B cell (primary cell): ENCODE measurements at regions of chr1 and their contacts with region 1.

Region 1: DNA sequence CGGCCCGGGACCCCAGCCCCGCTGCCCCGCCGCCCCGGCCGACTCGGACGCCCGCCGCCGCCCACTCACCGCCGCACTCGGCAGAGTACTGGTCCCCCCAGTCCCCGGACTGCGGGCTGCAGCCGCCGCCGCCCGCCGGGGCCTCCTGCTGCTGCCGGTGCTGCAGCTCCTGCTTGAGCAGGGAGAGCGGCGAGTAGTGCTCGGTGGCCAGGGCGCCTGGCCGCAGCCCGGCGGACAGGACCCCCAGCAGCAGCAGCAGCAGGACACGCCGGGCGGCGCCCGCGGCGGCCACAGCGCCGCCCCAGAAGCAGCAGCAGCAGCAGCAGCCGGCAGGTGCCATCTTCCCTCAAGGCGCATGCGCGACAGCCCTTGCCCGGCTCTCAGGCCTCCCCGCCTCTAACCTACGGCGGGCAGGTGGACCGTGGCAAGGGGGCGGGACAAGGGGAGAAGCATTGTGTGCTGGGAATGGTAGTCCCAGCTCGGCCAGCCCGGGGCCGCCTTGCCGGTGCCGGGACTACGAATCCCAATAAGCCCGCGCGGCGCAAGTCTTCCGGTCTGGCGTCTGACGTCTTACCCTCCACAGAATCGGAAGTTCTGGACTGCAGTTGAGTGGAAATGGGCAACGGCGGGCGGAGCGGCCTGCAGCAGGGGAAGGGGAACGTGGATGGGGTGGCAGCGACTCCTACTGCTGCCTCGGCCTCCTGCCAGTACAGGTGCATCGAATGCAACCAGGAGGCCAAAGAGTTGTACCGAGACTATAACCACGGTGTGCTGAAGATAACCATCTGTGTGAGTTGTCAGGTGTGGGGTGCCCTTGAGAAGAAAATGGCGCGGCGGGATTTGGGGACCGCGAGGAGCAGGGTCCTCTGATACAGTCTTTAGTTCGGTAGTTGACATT is at the starts of genes ARV1 and TTC13:
- DNase-seq: peak; percentile 99
- ATAC-seq: peak; percentile 95
- H3K4me3 ChIP-seq: peak within 1 kb of the TSS; percentile 67 to 91 (median 74)
- H3K4me3 Mint-ChIP-seq: peak within 1 kb of the TSS; percentile 99
- H3K27ac ChIP-seq: peak within 1 kb of the TSS; percentile 66 to 78
- H3K27ac Mint-ChIP-seq: peak within 1 kb of the TSS; percentile 99
- H3K4me1 ChIP-seq: peaks cover 29 to 40% of the 10 kb centered on the region in 2 donors
- H3K4me1 Mint-ChIP-seq: peaks cover 46% of the 10 kb centered on the region
- H3K27me3 ChIP-seq: no peaks in the 10 kb centered on the region
- H3K27me3 Mint-ChIP-seq: no peaks in the 10 kb centered on the region
- CTCF ChIP-seq: peak; percentile 76
- total RNA-seq, gene ARV1: 10.7 and 12.0 TPM in 2 replicates
- total RNA-seq, gene TTC13: 55.0 TPM in 2 replicates

Region 2: GRCh38 chr1:229341774-229342655 is 1636.7 kb before region 1 on chr1:
- CTCF ChIA-PET with region 1: no interaction called
- POLR2A ChIA-PET with region 1: no interaction called
- intact Hi-C with region 1: loop called (anchors 5 kb)
- DNase-seq: peak; percentile 91
- ATAC-seq: peak; percentile 82
- H3K4me3 ChIP-seq: peak overlapping the region; percentile 66 to 86 (median 80)
- H3K4me3 Mint-ChIP-seq: peak overlapping the region; percentile 88
- H3K27ac ChIP-seq: peak overlapping the region; percentile 24 to 79
- H3K27ac Mint-ChIP-seq: peak overlapping the region; percentile 90
- H3K4me1 ChIP-seq: peaks cover 21 to 23% of the 10 kb centered on the region in 2 donors
- H3K4me1 Mint-ChIP-seq: peaks cover 42% of the 10 kb centered on the region
- H3K27me3 ChIP-seq: peaks cover 0 to 12% (median 3%) of the 10 kb centered on the region in 4 experiments
- H3K27me3 Mint-ChIP-seq: peaks cover 20% of the 10 kb centered on the region
- CTCF ChIP-seq: no peak

Region 3: DNA sequence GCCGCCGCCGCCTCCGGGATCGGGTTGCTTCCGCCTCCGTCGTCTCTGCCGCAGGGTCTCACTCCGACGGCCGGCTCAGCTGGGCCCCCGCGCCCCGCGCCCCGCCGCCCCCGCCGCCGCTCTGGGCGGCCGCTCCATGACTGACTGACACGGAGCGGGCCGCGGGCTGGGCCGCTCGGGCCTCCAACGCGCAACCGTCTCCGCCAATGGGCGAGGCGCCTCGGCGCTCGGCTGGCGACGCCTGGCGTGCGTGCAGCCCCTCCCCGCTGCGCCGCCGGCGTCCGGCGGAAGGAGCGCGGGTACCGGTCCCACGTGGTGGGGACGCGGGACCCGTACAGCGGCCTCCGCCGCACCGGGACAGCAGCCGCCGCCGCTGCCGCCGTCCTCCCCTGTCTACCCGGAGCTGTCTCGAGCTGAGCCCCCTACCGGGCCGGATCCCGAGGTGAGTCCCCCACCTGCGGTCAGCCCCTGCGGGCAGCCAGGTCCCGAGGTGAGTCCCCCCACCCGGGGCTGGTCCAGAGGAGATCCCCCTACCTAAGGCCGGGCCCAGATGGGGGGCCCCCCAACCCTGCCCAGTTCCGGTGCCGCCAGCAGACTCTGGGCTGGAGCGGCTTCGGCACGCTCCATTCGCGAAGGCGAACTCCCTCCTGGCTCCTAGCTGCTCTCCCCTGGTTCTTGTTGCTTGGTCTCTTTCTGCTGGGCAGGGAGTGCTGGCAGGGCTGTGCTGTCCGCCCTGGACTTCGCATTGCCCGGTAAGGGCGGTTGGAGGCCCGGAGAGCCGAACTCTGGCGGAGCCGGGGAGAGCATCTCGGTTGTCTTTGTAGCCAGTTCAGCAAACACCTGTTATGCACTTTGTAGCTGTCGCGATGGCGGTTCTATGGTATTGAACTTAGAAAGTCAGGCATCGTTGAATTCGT is 1352.6 kb before region 1 on chr1 and contains the starts of genes TAF5L and URB2:
- CTCF ChIA-PET with region 1: no interaction called
- POLR2A ChIA-PET with region 1: no interaction called
- intact Hi-C with region 1: loop called (anchors 5 kb)
- DNase-seq: peak; percentile 90
- ATAC-seq: peak; percentile 92
- H3K4me3 ChIP-seq: peak within 1 kb of the TSS; percentile 74 to 91 (median 86)
- H3K4me3 Mint-ChIP-seq: peak within 1 kb of the TSS; percentile 98
- H3K27ac ChIP-seq: peak within 1 kb of the TSS; percentile 58 to 82
- H3K27ac Mint-ChIP-seq: peak within 1 kb of the TSS; percentile 93
- H3K4me1 ChIP-seq: peaks cover 25 to 28% of the 10 kb centered on the region in 2 donors
- H3K4me1 Mint-ChIP-seq: peaks cover 48% of the 10 kb centered on the region
- H3K27me3 ChIP-seq: no peaks in the 10 kb centered on the region
- H3K27me3 Mint-ChIP-seq: no peaks in the 10 kb centered on the region
- CTCF ChIP-seq: no peak
- total RNA-seq, gene TAF5L: 21.2 and 24.0 TPM in 2 replicates
- total RNA-seq, gene URB2: 9.6 and 11.2 TPM in 2 replicates

Region 4: GRCh38 chr1:230917284-230918135 is 61.2 kb before region 1 on chr1:
- CTCF ChIA-PET with region 1: interaction called, 14 read pairs
- POLR2A ChIA-PET with region 1: no interaction called
- intact Hi-C with region 1: loop called (anchors 1 kb)
- DNase-seq: peak; percentile 85
- ATAC-seq: peak; percentile 64
- H3K4me3 ChIP-seq: no peak overlapping the region
- H3K4me3 Mint-ChIP-seq: no peak overlapping the region
- H3K27ac ChIP-seq: peak overlapping the region in 1 of 2 donors; percentile 53
- H3K27ac Mint-ChIP-seq: no peak overlapping the region
- H3K4me1 ChIP-seq: no peaks in the 10 kb centered on the region
- H3K4me1 Mint-ChIP-seq: no peaks in the 10 kb centered on the region
- H3K27me3 ChIP-seq: no peaks in the 10 kb centered on the region
- H3K27me3 Mint-ChIP-seq: no peaks in the 10 kb centered on the region
- CTCF ChIP-seq: peak; percentile 91

Region 5: GRCh38 chr1:230940848-230941247 is 37.9 kb before region 1 on chr1:
- CTCF ChIA-PET with region 1: no interaction called
- POLR2A ChIA-PET with region 1: no interaction called
- intact Hi-C with region 1: loop called (anchors 5 kb)
- DNase-seq: no peak
- ATAC-seq: no peak
- H3K4me3 ChIP-seq: no peak overlapping the region
- H3K4me3 Mint-ChIP-seq: no peak overlapping the region
- H3K27ac ChIP-seq: no peak overlapping the region
- H3K27ac Mint-ChIP-seq: no peak overlapping the region
- H3K4me1 ChIP-seq: no peaks in the 10 kb centered on the region
- H3K4me1 Mint-ChIP-seq: no peaks in the 10 kb centered on the region
- H3K27me3 ChIP-seq: no peaks in the 10 kb centered on the region
- H3K27me3 Mint-ChIP-seq: no peaks in the 10 kb centered on the region
- CTCF ChIP-seq: no peak

Region 6: GRCh38 chr1:231040019-231040799 is 61.5 kb after region 1 on chr1 and contains the start of gene FAM89A:
- CTCF ChIA-PET with region 1: no interaction called
- POLR2A ChIA-PET with region 1: interaction called, 4 read pairs
- intact Hi-C with region 1: loop called (anchors 1 kb)
- DNase-seq: peak; percentile 84
- ATAC-seq: peak; percentile 82
- H3K4me3 ChIP-seq: peak within 1 kb of the TSS; percentile 6 to 85 (median 68)
- H3K4me3 Mint-ChIP-seq: peak within 1 kb of the TSS; percentile 86
- H3K27ac ChIP-seq: no peak within 1 kb of the TSS
- H3K27ac Mint-ChIP-seq: peak within 1 kb of the TSS; percentile 47
- H3K4me1 ChIP-seq: peaks cover 13% of the 10 kb centered on the region in 2 donors
- H3K4me1 Mint-ChIP-seq: peaks cover 16% of the 10 kb centered on the region
- H3K27me3 ChIP-seq: peaks cover 0 to 11% (median 3%) of the 10 kb centered on the region in 4 experiments
- H3K27me3 Mint-ChIP-seq: peaks cover 6% of the 10 kb centered on the region
- CTCF ChIP-seq: no peak
- total RNA-seq, gene FAM89A: 5.6 and 6.1 TPM in 2 replicates

Region 7: DNA sequence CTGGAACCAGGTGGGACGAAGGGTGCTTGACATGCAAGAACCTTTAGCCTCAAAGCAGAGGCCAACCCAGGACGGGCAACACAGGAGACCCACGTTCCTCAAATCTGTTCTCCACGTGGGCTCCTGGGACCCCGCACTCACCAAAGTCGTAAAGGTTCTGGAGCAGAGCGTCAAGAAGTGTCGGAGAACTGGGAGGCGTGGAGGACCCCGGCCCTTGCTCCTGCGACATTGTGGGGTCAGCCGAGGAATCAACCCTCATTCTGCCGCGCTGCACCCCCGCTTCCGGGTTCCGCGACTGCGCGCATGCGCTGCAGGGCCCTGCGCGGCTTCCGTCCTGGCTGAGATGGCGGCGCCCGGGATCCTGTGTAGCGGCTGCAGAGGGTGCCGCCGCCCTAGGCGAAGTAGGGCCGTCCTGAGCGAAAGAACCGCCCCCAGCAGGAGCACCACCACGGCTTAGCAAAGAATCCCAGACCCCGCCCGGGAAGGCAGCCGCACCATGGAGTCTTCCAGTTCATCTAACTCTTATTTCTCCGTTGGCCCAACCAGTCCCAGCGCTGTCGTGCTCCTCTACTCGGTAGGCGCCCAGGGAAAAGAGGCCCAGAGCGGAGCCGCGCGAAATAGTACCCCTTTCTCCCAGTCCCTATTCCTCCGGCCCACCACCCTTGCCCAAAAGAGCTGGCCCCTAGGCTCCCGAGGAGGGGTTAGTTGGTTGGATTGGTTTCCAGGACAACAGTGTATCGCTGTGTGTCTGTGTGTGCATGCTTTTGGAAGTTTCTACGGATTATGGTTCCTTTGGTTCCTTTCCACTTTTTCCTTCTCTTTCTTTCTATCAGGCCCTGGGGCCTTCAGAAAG is 262.4 kb after region 1 on chr1 and contains the start of gene GNPAT:
- CTCF ChIA-PET with region 1: no interaction called
- POLR2A ChIA-PET with region 1: no interaction called
- intact Hi-C with region 1: loop called (anchors 1 kb)
- DNase-seq: peak; percentile 93
- ATAC-seq: peak; percentile 96
- H3K4me3 ChIP-seq: peak within 1 kb of the TSS; percentile 78 to 92 (median 88)
- H3K4me3 Mint-ChIP-seq: peak within 1 kb of the TSS; percentile 96
- H3K27ac ChIP-seq: peak within 1 kb of the TSS; percentile 76 to 87
- H3K27ac Mint-ChIP-seq: peak within 1 kb of the TSS; percentile 95
- H3K4me1 ChIP-seq: peaks cover 23 to 29% of the 10 kb centered on the region in 2 donors
- H3K4me1 Mint-ChIP-seq: peaks cover 68% of the 10 kb centered on the region
- H3K27me3 ChIP-seq: no peaks in the 10 kb centered on the region
- H3K27me3 Mint-ChIP-seq: no peaks in the 10 kb centered on the region
- CTCF ChIP-seq: no peak
- total RNA-seq, gene GNPAT: 48.0 and 49.0 TPM in 2 replicates

Region 8: GRCh38 chr1:231326248-231326647 is 347.5 kb after region 1 on chr1:
- CTCF ChIA-PET with region 1: no interaction called
- POLR2A ChIA-PET with region 1: no interaction called
- intact Hi-C with region 1: no loop called
- DNase-seq: no peak
- ATAC-seq: no peak
- H3K4me3 ChIP-seq: no peak overlapping the region
- H3K4me3 Mint-ChIP-seq: no peak overlapping the region
- H3K27ac ChIP-seq: no peak overlapping the region
- H3K27ac Mint-ChIP-seq: no peak overlapping the region
- H3K4me1 ChIP-seq: no peaks in the 10 kb centered on the region
- H3K4me1 Mint-ChIP-seq: peaks cover 11% of the 10 kb centered on the region
- H3K27me3 ChIP-seq: no peaks in the 10 kb centered on the region
- H3K27me3 Mint-ChIP-seq: no peaks in the 10 kb centered on the region
- CTCF ChIP-seq: no peak